Vagina (tissue), 2 donors: ENCODE measurements at regions of chr9 and their contacts with region 1.

Region 1: GRCh38 chr9:116149844-116150243 is 3.7 kb upstream of the PAPPA start:
- DNase-seq: no peak
- H3K4me3 ChIP-seq: no peak overlapping the region
- H3K27ac ChIP-seq: no peak overlapping the region
- H3K4me1 ChIP-seq: peaks cover 5% of the 10 kb centered on the region
- H3K27me3 ChIP-seq: no peaks in the 10 kb centered on the region
- CTCF ChIP-seq: peak in 2 of 3 experiments; percentile 12 to 46
- POLR2A ChIP-seq: no peak

Region 2: DNA sequence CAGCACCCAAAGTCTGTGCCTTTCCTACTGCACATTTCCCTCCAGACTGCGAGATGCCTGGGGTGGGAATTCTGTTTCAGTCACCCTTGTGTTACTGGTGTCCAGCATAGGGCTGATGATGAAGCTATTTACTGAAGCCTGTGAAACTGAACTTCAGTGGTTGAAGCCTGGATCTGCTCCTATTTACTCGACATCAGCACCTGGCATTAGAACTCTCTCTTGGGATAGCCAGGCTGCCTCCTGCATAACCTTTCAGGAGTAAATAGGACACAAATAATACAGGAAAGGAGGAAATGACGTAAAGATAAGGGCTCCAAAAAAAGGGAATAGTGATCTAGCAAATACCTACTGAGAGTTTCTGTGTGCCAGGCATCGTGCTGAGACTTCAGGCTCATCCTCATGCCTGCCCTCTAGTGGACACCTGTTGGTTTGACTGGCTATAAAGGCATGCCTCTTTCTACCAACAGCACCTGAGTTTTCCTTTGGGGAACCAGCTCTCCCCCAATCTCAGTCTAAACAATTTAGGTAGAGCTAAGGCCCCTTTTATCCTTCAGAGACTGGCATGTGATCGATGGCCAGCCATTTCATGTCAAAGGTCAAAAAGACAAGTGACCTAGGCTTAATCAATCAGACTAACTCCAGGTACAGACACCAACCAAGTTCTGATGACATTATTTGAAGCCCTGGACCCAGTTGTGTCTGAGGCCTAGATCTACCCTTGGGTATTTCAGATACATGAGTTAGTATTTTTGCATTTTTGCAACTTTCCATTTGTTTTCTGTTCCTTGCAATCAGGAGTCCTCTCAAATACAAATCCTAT is 345.2 kb after region 1 on chr9:
- intact Hi-C with region 1: loop called (anchors 5 kb)
- DNase-seq: no peak
- H3K4me3 ChIP-seq: no peak overlapping the region
- H3K27ac ChIP-seq: no peak overlapping the region
- H3K4me1 ChIP-seq: peaks cover 14% of the 10 kb centered on the region
- H3K27me3 ChIP-seq: no peaks in the 10 kb centered on the region
- CTCF ChIP-seq: peak in 2 of 3 experiments; percentile 23 to 44
- POLR2A ChIP-seq: no peak

Region 3: DNA sequence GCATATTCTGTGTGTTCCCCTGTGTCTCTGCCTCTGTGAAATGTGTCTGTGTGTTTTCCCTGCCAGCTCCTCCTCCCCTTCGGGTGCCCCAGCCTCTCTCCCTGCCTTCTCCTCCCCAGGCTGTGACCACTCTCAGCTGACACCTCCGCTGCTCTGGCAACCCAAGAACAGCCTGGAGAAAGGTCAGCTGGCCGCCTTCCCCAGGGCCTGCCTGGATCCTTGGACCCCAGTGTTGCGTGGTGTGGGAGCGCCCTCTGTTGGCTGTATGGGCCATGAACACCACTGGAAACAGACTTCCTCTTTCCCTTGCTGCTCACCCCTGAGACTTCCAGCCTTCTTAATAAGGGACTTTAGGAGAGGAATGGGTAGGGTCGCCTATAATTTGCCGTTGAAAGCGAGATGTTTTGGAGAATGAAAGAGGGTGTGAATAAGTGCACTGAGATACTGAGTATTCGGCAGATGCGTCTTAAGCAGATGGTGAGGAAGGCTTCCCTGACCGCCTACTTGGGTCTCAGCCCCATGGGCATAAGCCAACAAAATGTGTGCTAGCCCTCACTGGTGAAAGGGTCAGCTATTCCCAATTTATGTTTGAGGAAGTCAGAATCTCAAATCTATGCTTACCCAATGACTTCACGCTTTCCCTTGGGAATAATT is 422.4 kb after region 1 on chr9:
- intact Hi-C with region 1: loop called (anchors 5 kb)
- DNase-seq: no peak
- H3K4me3 ChIP-seq: no peak overlapping the region
- H3K27ac ChIP-seq: peak overlapping the region; percentile 67
- H3K4me1 ChIP-seq: peaks cover 18% of the 10 kb centered on the region
- H3K27me3 ChIP-seq: no peaks in the 10 kb centered on the region
- CTCF ChIP-seq: peak; percentile 63 to 94 (median 85)
- POLR2A ChIP-seq: no peak

Region 4: GRCh38 chr9:116661037-116661954 is 511.5 kb after region 1 on chr9:
- intact Hi-C with region 1: loop called (anchors 10 kb)
- DNase-seq: no peak
- H3K4me3 ChIP-seq: no peak overlapping the region
- H3K27ac ChIP-seq: no peak overlapping the region
- H3K4me1 ChIP-seq: peaks cover 20% of the 10 kb centered on the region
- H3K27me3 ChIP-seq: no peaks in the 10 kb centered on the region
- CTCF ChIP-seq: peak; percentile 21 to 64 (median 56)
- POLR2A ChIP-seq: no peak

Region 5: DNA sequence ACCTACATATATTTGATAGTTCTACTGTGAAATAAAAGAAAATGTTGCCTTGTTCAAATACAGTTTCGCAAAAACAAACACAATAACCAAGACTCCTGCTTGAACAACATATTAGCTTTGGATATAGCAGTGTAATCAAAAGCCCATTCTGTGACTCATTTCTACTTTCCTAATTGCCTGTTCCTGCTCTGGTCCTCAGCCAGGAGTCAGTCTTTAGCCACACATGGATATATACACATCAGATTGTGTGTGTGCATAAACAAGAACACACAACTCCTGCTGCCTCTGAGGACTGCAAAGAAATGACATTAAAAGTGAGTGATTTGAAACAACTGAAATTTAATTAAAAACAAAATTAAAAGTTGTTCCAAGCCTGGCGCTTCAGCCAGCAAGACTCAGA is 872.1 kb after region 1 on chr9:
- intact Hi-C with region 1: no loop called
- DNase-seq: no peak
- H3K4me3 ChIP-seq: no peak overlapping the region
- H3K27ac ChIP-seq: no peak overlapping the region
- H3K4me1 ChIP-seq: no peaks in the 10 kb centered on the region
- H3K27me3 ChIP-seq: no peaks in the 10 kb centered on the region
- CTCF ChIP-seq: no peak
- POLR2A ChIP-seq: no peak